ENCODE measurements at regions of chr15 and their contacts with region 1.

Region 1: GRCh38 chr15:67109141-67110034 is 44.0 kb downstream of the SMAD3 start:
- DNase-seq: peak; percentile 61
- ATAC-seq: no peak
- H3K4me3 ChIP-seq: no peak overlapping the region
- H3K27ac ChIP-seq: peak overlapping the region; percentile 16
- H3K4me1 ChIP-seq: peaks cover 73% of the 10 kb centered on the region
- H3K27me3 ChIP-seq: no peaks in the 10 kb centered on the region
- CTCF ChIP-seq: no peak
- EP300 ChIP-seq: no peak; a peak in 1 of 4 replicates
- POLR2A ChIP-seq: no peak
- RAD21 ChIP-seq: no peak

Region 2: GRCh38 chr15:66356345-66357236 is 752.8 kb before region 1 on chr15 and contains the start of gene TIPIN:
- CTCF ChIA-PET with region 1: no interaction called
- POLR2A ChIA-PET with region 1: no interaction called
- in situ Hi-C with region 1: no loop called
- intact Hi-C with region 1: no loop called
- DNase-seq: peak; percentile 90
- ATAC-seq: peak; percentile 97
- H3K4me3 ChIP-seq: peak within 1 kb of the TSS; percentile 90 to 91 (median 90)
- H3K27ac ChIP-seq: peak within 1 kb of the TSS; percentile 81
- H3K4me1 ChIP-seq: peaks cover 39% of the 10 kb centered on the region
- H3K27me3 ChIP-seq: no peaks in the 10 kb centered on the region; a peak in 2 of 5 replicates
- CTCF ChIP-seq: no peak
- EP300 ChIP-seq: no peak
- POLR2A ChIP-seq: peak; percentile 84 to 91
- RAD21 ChIP-seq: no peak
- total RNA-seq, gene TIPIN: 28.6 and 37.9 TPM in 2 replicates

Region 3: DNA sequence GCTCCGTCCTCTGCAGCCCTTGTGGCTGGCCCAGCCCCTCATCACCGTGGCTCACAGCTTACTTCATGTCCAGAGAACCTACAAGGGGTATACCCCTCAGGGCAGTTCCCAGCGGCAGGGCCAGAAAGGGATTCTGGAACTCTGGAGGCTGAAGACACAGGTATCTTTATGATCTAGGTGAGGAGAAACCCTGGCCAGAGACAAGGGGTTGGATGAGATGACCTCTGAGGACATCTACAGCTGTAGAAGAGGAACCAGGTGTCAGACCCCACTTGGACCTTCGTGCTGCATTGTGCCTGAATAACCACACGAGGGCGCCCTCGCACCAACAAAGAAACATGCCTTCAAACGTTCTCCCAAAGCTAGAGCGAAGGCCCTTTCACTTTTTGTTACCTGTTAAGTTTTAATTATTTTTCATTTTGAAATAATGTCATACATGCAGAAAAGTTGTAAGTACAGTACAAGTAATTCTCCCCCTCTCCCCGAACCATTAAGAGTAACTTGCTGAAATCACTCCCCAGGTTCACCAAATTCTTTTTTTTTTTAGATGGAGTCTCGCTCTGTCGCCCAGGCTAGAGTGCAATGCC is 162.7 kb before region 1 on chr15:
- CTCF ChIA-PET with region 1: no interaction called
- POLR2A ChIA-PET with region 1: interaction called, 3 read pairs
- in situ Hi-C with region 1: no loop called
- intact Hi-C with region 1: loop called (anchors 5 kb)
- DNase-seq: peak; percentile 67
- ATAC-seq: peak; percentile 65
- H3K4me3 ChIP-seq: peak overlapping the region in 1 of 3 experiments; percentile 25; a peak in 1 of 6 replicates
- H3K27ac ChIP-seq: no peak overlapping the region
- H3K4me1 ChIP-seq: peaks cover 42% of the 10 kb centered on the region
- H3K27me3 ChIP-seq: peaks cover 1 to 16% of the 10 kb centered on the region in 2 experiments; a peak in 3 of 5 replicates
- CTCF ChIP-seq: peak; percentile 93
- EP300 ChIP-seq: no peak
- POLR2A ChIP-seq: no peak
- RAD21 ChIP-seq: peak; percentile 89

Region 4: DNA sequence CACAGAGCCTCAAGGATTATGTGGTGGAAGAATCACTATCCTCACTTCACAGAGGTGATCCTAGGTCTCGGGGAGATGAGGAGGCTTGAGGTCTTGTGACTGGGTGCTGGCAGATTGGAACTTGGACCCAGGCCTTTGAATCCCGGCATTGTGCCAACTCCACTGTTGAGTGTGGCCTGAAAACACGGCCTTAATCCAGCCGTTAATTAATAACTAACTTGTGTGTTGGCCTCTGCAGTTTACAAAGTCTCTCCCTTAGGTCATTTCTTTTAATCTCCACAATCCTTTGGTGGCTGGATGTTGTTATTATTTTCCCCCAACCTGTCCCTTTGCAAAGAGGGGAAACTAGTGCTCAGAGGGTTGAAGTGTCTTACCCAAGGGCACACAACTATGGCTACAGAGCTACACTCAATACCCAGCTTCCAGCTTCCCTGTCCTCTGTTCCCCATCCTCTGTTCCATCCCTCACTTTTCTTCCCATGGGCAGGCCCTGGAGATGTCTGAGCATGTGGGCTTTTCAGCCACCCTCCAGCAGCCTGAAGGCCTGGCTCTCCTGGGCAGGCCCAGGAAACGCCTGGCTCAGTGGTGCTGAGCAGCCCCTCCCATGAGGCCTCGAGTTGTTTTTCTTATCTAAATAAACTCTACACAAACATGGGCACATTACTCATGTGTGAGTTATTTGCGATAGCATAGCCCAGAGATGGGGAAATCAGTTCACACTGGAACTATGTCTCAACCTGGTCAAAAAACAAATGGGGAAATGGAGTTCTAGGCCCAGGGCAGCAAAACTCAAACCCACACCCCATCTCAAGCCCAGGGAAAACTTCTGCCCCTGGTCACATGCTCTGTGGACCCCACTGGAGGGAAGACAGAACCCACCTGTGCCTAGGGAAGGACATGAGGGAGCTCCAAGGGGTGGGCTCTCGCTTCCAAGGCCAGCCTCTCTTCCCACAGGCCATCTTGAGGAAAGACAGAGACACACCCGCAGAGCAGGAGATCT is 60.8 kb before region 1 on chr15:
- CTCF ChIA-PET with region 1: no interaction called
- POLR2A ChIA-PET with region 1: interaction called, 15 read pairs
- in situ Hi-C with region 1: no loop called
- intact Hi-C with region 1: no loop called
- DNase-seq: peak; percentile 97
- ATAC-seq: peak; percentile 91
- H3K4me3 ChIP-seq: peak overlapping the region; percentile 6 to 56 (median 36); a peak in 5 of 6 replicates
- H3K27ac ChIP-seq: peak overlapping the region; percentile 100
- H3K4me1 ChIP-seq: peaks cover 6% of the 10 kb centered on the region
- H3K27me3 ChIP-seq: no peaks in the 10 kb centered on the region
- CTCF ChIP-seq: no peak
- EP300 ChIP-seq: peak; percentile 77 to 86
- POLR2A ChIP-seq: peak in 1 of 2 experiments; percentile 88; a peak in 2 of 4 replicates
- RAD21 ChIP-seq: peak; percentile 23; the same call in 1 of the 2 replicates

Region 5: GRCh38 chr15:67059127-67059553 is 50.2 kb before region 1 on chr15:
- CTCF ChIA-PET with region 1: no interaction called
- POLR2A ChIA-PET with region 1: interaction called, 64 read pairs
- in situ Hi-C with region 1: no loop called
- intact Hi-C with region 1: loop called (anchors 2 kb)
- DNase-seq: peak; percentile 64
- ATAC-seq: peak; percentile 74
- H3K4me3 ChIP-seq: peak overlapping the region; percentile 71 to 92 (median 83)
- H3K27ac ChIP-seq: peak overlapping the region; percentile 87
- H3K4me1 ChIP-seq: peaks cover 81% of the 10 kb centered on the region
- H3K27me3 ChIP-seq: no peaks in the 10 kb centered on the region; a peak in 1 of 5 replicates
- CTCF ChIP-seq: no peak
- EP300 ChIP-seq: peak in 1 of 2 experiments; percentile 37; a peak in 1 of 4 replicates
- POLR2A ChIP-seq: peak; percentile 49; a peak in 3 of 4 replicates
- RAD21 ChIP-seq: no peak

Region 6: GRCh38 chr15:67134067-67134838 is 24.9 kb after region 1 on chr15:
- CTCF ChIA-PET with region 1: no interaction called
- POLR2A ChIA-PET with region 1: interaction called, 11 read pairs
- in situ Hi-C with region 1: no loop called
- intact Hi-C with region 1: loop called (anchors 2 kb)
- DNase-seq: no peak
- ATAC-seq: peak; percentile 55
- H3K4me3 ChIP-seq: peak overlapping the region in 1 of 3 experiments; percentile 18; a peak in 1 of 6 replicates
- H3K27ac ChIP-seq: peak overlapping the region; percentile 60
- H3K4me1 ChIP-seq: peaks cover 81% of the 10 kb centered on the region
- H3K27me3 ChIP-seq: no peaks in the 10 kb centered on the region
- CTCF ChIP-seq: no peak
- EP300 ChIP-seq: no peak
- POLR2A ChIP-seq: no peak
- RAD21 ChIP-seq: no peak

Region 7: GRCh38 chr15:67146875-67147381 is 37.5 kb after region 1 on chr15:
- CTCF ChIA-PET with region 1: no interaction called
- POLR2A ChIA-PET with region 1: interaction called, 18 read pairs
- in situ Hi-C with region 1: no loop called
- intact Hi-C with region 1: loop called (anchors 2 kb)
- DNase-seq: peak; percentile 97
- ATAC-seq: peak; percentile 94
- H3K4me3 ChIP-seq: peak overlapping the region; percentile 30 to 44 (median 35); a peak in 4 of 6 replicates
- H3K27ac ChIP-seq: peak overlapping the region; percentile 76
- H3K4me1 ChIP-seq: peaks cover 83% of the 10 kb centered on the region
- H3K27me3 ChIP-seq: no peaks in the 10 kb centered on the region
- CTCF ChIP-seq: no peak
- EP300 ChIP-seq: peak; percentile 37 to 88; a peak in 3 of 4 replicates
- POLR2A ChIP-seq: no peak
- RAD21 ChIP-seq: no peak

Measured in HepG2 (cell line).